Activated CD4-positive, alpha-beta T cell treated with anti-CD3 and anti-CD28 coated beads, Interleukin-2, amount 10 ng/mL, durations not matched to agents 24 days and 14 days (primary cell): ENCODE measurements at regions of chr10 and their contacts with region 1.

Region 1: DNA sequence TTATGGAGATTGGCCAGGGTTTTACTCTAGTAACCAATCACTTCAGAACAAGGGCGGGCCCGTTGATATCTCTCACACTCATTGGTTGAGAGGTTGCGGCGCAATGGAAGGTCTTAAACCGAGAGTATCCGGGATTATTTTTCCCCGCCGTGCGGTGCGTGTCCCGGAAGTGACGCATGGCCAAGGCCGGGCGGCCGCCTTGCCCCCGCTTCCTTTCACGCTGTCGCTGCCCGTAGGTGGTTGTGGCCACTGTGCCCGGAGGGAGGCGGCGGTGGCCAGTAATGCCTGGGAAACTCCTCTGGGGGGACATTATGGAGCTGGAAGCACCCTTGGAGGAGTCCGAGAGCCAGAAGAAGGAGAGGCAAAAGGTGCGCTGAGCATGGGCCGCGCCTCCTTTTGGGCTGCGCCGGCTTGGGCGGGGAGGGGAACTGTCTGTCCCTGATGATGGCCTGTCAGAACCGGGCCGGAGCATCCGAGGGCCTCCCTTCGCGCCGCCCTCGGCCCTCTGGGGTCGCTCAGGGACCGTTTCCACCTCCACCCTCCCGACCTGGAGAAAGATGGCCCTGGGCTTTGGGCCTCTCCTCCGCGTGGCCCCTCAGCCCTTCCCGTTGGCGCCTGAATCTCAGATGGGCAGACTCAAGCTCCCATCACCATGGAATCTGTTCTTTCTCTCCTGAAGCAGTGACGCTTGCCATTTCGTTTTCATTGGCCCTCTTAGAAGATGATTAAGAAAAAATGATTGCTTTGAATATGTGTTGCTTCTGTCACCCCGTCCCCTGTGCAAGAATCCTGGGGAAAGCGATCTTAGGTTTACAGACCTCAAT is at the start of gene DDX50:
- DNase-seq: peak; percentile 99
- H3K4me3 Mint-ChIP-seq: peak within 1 kb of the TSS; percentile 96
- H3K27ac Mint-ChIP-seq: peak within 1 kb of the TSS; percentile 99
- H3K4me1 Mint-ChIP-seq: peaks cover 39% of the 10 kb centered on the region
- H3K27me3 Mint-ChIP-seq: peaks cover 3% of the 10 kb centered on the region
- total RNA-seq, gene DDX50: 60.2 and 63.0 TPM in 2 replicates

Region 2: DNA sequence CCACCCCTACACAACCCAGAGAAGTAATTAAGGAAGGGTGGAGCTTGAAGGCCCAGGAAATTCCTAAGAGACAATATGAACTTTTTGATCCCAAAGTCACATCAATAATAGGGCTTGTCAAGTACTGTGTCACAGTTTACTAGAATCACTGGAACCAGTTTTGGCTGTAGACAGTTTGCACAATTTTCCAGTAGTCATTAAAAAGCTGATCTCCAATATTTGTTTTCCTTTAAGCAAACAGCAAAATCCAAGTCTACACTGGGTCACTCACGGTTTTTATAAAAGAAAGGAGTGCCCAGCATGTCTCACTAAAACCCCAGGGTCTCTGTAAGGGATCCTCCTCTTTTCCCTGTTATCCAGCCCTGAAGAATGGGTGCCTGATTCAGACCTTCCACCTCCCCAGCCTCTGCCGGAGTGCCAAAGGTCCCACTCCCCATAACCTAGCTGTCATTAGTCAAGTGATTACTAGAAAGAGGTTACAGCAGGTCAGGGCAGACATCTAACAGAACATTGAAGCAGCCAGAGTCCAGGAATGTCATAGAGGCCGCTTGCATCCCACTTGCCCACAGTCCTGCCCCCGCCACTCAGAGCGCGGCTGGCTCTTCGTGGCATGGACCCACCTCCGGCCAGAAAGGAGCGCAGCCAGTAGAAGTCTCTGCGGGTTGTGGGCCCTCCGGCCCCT is 374.5 kb before region 1 on chr10:
- intact Hi-C with region 1: loop called (anchors 1 kb)
- DNase-seq: no peak
- H3K4me3 Mint-ChIP-seq: peak overlapping the region; percentile 97
- H3K27ac Mint-ChIP-seq: peak overlapping the region; percentile 87
- H3K4me1 Mint-ChIP-seq: peaks cover 6% of the 10 kb centered on the region
- H3K27me3 Mint-ChIP-seq: no peaks in the 10 kb centered on the region

Region 3: GRCh38 chr10:68792115-68792514 is 109.2 kb before region 1 on chr10:
- intact Hi-C with region 1: loop called (anchors 2 kb)
- DNase-seq: no peak
- H3K4me3 Mint-ChIP-seq: no peak overlapping the region
- H3K27ac Mint-ChIP-seq: no peak overlapping the region
- H3K4me1 Mint-ChIP-seq: no peaks in the 10 kb centered on the region
- H3K27me3 Mint-ChIP-seq: no peaks in the 10 kb centered on the region

Region 4: DNA sequence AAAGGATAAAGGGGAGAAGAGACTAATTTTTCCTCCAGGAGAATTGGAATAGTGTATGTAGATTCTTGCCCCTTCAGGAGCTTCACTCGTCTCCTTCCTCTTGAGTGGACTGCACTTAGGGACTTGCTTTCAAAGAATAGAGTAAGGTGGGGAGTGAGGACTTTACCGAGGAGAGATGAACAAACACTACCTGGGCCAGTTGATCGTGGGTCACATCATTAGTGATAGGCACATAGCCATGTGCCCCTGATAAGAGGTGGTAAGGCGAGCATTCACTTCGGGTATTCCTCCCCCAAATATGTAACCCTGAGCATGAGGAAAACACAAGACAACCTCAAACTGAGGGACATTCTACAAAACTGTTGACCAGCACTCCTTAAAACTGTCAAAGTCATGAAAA is 72.7 kb after region 1 on chr10:
- intact Hi-C with region 1: loop called (anchors 5 kb)
- DNase-seq: no peak
- H3K4me3 Mint-ChIP-seq: no peak overlapping the region
- H3K27ac Mint-ChIP-seq: no peak overlapping the region
- H3K4me1 Mint-ChIP-seq: peaks cover 15% of the 10 kb centered on the region
- H3K27me3 Mint-ChIP-seq: no peaks in the 10 kb centered on the region

Region 5: GRCh38 chr10:69179743-69180524 is 278.6 kb after region 1 on chr10 and contains the start of gene SUPV3L1:
- intact Hi-C with region 1: loop called (anchors 1 kb)
- DNase-seq: peak; percentile 96
- H3K4me3 Mint-ChIP-seq: peak within 1 kb of the TSS; percentile 88
- H3K27ac Mint-ChIP-seq: peak within 1 kb of the TSS; percentile 99
- H3K4me1 Mint-ChIP-seq: peaks cover 25% of the 10 kb centered on the region
- H3K27me3 Mint-ChIP-seq: no peaks in the 10 kb centered on the region
- total RNA-seq, gene SUPV3L1: 58.3 and 63.9 TPM in 2 replicates